PC-9 (cell line): ENCODE measurements at regions of chr7 and their contacts with region 1.

Region 1: DNA sequence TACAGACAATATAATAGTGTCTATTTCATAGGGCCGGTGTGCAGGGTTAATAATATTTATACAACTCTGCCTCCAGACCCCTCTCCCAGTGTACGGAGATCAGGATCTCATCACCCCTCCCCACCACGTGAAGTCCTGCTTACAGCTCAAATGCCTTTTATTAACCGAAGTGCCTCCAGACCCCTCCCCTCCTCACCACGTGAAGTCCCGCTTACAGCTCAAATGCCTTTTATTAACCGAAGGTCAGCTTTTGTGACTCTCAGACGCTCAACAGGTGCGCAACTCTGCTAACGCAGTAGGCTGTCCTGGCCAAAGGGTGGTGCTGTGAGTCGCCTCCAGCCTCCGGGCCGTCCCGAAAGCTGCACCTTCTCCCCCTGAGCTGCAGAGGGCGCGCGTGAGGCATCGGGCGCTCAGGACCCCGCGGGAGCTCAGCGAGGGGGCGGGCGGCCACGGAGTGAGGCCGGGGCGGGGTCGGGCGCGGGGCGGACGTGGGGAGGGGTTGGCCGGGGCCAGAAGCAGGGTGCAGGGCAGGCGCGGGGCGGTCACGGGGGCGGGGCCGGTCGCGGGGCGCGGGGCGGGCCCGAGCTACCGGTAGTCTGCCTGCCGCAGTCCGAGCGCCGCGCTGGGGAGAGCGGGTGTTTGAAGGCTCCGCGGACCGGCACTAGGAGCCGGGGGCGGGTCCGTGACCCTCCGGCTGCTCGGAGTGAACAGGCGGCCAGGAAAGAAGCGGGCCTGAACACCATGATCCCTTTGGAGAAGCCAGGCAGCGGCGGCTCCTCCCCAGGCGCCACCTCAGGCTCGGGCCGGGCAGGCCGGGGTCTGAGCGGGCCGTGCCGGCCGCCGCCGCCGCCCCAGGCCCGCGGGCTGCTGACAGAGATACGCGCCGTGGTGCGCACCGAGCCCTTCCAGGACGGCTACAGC is at the start of gene STK17A:
- DNase-seq: peak; percentile 90 to 99
- H3K4me3 ChIP-seq: peak within 1 kb of the TSS; percentile 93
- H3K27ac ChIP-seq: peak within 1 kb of the TSS; percentile 78
- H3K4me1 ChIP-seq: peaks cover 38% of the 10 kb centered on the region
- H3K27me3 ChIP-seq: no peaks in the 10 kb centered on the region
- CTCF ChIP-seq: peak; percentile 99
- total RNA-seq, gene STK17A: 15.8 and 18.8 TPM in 2 replicates

Region 2: DNA sequence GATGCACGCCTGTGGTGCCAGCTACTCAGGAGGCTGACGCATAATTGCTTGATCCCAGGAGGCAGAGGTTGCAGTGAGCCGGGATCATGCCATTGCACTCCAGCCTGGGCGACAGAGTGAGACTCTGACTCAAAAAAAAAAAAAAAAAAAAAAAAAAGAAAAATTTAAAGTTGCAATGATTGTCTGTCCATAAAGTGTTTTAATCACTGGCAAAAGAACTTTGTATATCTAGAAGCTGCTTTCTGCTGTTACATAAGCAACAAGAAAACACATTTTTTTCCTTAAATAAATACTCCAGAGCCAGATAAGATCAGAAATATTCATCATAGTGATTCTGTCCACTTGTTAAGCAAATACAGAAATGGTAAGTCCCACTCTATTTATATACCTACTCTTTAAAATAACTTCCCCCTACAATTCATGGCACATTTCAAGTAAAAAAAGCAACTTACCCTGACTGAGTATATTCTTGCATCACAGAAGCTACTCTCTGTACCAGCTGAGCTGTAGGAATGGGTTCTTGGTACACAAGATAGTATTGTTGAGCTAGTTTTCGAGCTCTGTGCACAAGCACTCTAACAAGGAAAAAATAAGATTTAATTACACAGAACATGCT is 658.4 kb before region 1 on chr7:
- CTCF ChIA-PET with region 1: no interaction called
- POLR2A ChIA-PET with region 1: interaction called, 13 read pairs
- intact Hi-C with region 1: no loop called
- DNase-seq: no peak
- H3K4me3 ChIP-seq: no peak overlapping the region
- H3K27ac ChIP-seq: no peak overlapping the region
- H3K4me1 ChIP-seq: 0 out of 2 replicates have a peak, but pooled peaks cover 7% of the 10 kb centered on the region
- H3K27me3 ChIP-seq: no peaks in the 10 kb centered on the region
- CTCF ChIP-seq: no peak

Region 3: GRCh38 chr7:43572516-43573049 is 10.2 kb before region 1 on chr7:
- CTCF ChIA-PET with region 1: interaction called, 31 read pairs
- POLR2A ChIA-PET with region 1: interaction called, 34 read pairs
- intact Hi-C with region 1: no loop called
- DNase-seq: peak; percentile 46 to 98
- H3K4me3 ChIP-seq: no peak overlapping the region
- H3K27ac ChIP-seq: peak overlapping the region; percentile 87
- H3K4me1 ChIP-seq: peaks cover 15% of the 10 kb centered on the region
- H3K27me3 ChIP-seq: no peaks in the 10 kb centered on the region
- CTCF ChIP-seq: no peak

Region 4: DNA sequence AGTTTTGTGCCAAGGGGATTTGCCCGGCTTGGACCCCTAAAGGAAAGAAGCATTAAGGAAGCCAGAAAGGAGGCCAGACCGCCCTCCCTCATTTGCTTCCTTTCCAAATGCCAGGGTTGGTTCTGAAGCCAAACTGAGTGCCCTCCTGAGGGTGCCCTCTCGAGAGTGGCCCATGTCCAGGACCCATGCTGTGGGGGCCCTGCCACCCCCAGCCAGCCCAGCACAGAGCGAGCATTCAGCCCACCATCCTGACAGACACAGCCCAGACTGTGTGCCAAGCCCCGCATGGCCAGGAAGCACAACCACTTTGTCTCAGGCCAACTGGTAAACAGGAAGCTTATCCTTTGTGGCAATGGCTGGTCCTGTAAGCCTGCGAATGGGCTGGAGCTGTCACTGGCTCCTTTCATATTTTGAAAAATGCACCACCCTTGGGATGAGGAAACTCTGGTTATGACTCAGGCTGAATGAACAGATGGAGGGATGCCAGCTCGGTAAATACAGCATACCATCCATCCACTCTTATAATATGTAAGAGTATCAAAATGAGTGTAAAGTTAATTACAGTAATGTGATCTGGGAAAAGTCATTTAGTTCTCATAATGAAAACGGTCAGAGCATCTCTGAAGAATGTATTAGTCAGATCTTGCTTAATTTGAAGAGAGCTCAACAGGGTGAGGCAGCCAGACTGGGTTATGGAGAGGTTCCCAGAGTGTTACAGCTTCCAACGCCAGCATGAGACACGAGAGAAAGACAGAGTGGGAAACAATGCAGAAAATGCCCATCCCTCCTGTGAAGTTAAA is 65.1 kb after region 1 on chr7:
- CTCF ChIA-PET with region 1: interaction called, 18 read pairs
- POLR2A ChIA-PET with region 1: interaction called, 8 read pairs
- intact Hi-C with region 1: loop called (anchors 1 kb)
- DNase-seq: peak; percentile 82 to 100
- H3K4me3 ChIP-seq: peak overlapping the region; percentile 28; the same call in 1 of the 2 replicates
- H3K27ac ChIP-seq: peak overlapping the region; percentile 98
- H3K4me1 ChIP-seq: peaks cover 73% of the 10 kb centered on the region
- H3K27me3 ChIP-seq: no peaks in the 10 kb centered on the region
- CTCF ChIP-seq: no peak

Region 5: GRCh38 chr7:43721193-43721806 is 138.5 kb after region 1 on chr7:
- CTCF ChIA-PET with region 1: interaction called, 12 read pairs
- POLR2A ChIA-PET with region 1: no interaction called
- intact Hi-C with region 1: no loop called
- DNase-seq: peak in 1 of 2 experiments; percentile 44
- H3K4me3 ChIP-seq: no peak overlapping the region
- H3K27ac ChIP-seq: no peak overlapping the region
- H3K4me1 ChIP-seq: peaks cover 26% of the 10 kb centered on the region
- H3K27me3 ChIP-seq: no peaks in the 10 kb centered on the region
- CTCF ChIP-seq: peak; percentile 95

Region 6: GRCh38 chr7:43792471-43793150 is 209.8 kb after region 1 on chr7:
- CTCF ChIA-PET with region 1: interaction called, 14 read pairs
- POLR2A ChIA-PET with region 1: interaction called, 3 read pairs
- intact Hi-C with region 1: no loop called
- DNase-seq: no peak
- H3K4me3 ChIP-seq: no peak overlapping the region
- H3K27ac ChIP-seq: no peak overlapping the region
- H3K4me1 ChIP-seq: no peaks in the 10 kb centered on the region
- H3K27me3 ChIP-seq: no peaks in the 10 kb centered on the region
- CTCF ChIP-seq: no peak

Region 7: GRCh38 chr7:43879477-43879876 is 296.7 kb after region 1 on chr7:
- CTCF ChIA-PET with region 1: no interaction called
- POLR2A ChIA-PET with region 1: no interaction called
- intact Hi-C with region 1: no loop called
- DNase-seq: no peak
- H3K4me3 ChIP-seq: no peak overlapping the region
- H3K27ac ChIP-seq: no peak overlapping the region
- H3K4me1 ChIP-seq: peaks cover 8% of the 10 kb centered on the region
- H3K27me3 ChIP-seq: no peaks in the 10 kb centered on the region
- CTCF ChIP-seq: no peak

Region 8: DNA sequence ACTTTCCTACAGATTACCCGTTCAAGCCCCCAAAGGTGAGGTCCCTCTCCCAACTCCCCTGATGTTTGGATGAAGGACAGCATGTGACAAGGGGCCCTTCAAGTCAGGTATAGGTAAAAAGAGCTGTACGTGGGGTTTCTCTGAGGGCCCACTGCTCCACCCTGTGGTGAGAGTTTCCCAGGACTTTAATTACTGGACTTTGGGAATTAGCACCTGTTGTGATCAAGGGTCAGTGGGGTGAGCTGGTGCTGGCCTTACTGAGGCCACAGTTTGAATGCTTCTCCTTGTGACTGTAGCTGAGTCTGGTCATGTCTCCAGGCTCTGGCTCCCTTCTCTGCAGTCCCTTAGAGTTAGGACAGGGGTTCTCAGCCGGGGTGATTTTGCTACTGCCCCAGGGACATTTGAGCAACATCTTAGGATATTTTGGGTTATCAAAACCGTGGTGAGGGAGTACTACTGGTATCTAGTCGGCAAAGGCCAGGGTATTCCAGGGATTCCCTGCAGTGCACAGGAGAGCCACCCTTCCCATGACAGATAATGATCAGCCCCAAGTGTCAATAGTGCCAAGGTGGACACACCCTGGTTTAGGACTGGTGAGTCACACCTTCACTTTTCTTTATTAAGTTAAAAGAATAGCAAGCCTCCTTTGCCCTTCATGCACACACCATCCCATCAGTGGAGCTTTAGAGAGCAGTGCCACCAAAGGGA is 360.4 kb after region 1 on chr7:
- CTCF ChIA-PET with region 1: interaction called, 4 read pairs
- POLR2A ChIA-PET with region 1: interaction called, 4 read pairs
- intact Hi-C with region 1: loop called (anchors 5 kb)
- DNase-seq: peak; percentile 55 to 86
- H3K4me3 ChIP-seq: no peak overlapping the region
- H3K27ac ChIP-seq: no peak overlapping the region
- H3K4me1 ChIP-seq: peaks cover 23% of the 10 kb centered on the region
- H3K27me3 ChIP-seq: no peaks in the 10 kb centered on the region
- CTCF ChIP-seq: peak; percentile 68